ENCODE measurements at regions of chr19 and their contacts with region 1.

Region 1: GRCh38 chr19:54373781-54374631 is 9.3 kb upstream of the LAIR1 start:
- DNase-seq: peak in 1 of 9 experiments; percentile 37
- ATAC-seq: no peak
- H3K4me3 ChIP-seq: no peak overlapping the region
- H3K4me3 Mint-ChIP-seq: no peak overlapping the region
- H3K27ac ChIP-seq: no peak overlapping the region
- H3K27ac Mint-ChIP-seq: no peak overlapping the region
- H3K4me1 ChIP-seq: peaks cover 82% of the 10 kb centered on the region
- H3K4me1 Mint-ChIP-seq: peaks cover 77% of the 10 kb centered on the region
- H3K27me3 ChIP-seq: no peaks in the 10 kb centered on the region
- H3K27me3 Mint-ChIP-seq: no peaks in the 10 kb centered on the region
- CTCF ChIP-seq: no peak

Region 2: GRCh38 chr19:53879140-53880081 is 494.6 kb before region 1 on chr19:
- CTCF ChIA-PET with region 1: no interaction called
- POLR2A ChIA-PET with region 1: no interaction called
- intact Hi-C with region 1: loop called in 1 of 2 experiments (anchors 10 kb)
- DNase-seq: peak; percentile 70 to 89 (median 79)
- ATAC-seq: peak; percentile 80
- H3K4me3 ChIP-seq: peak overlapping the region; percentile 53 to 55
- H3K4me3 Mint-ChIP-seq: no peak overlapping the region
- H3K27ac ChIP-seq: no peak overlapping the region
- H3K27ac Mint-ChIP-seq: no peak overlapping the region
- H3K4me1 ChIP-seq: peaks cover 76% of the 10 kb centered on the region
- H3K4me1 Mint-ChIP-seq: peaks cover 50% of the 10 kb centered on the region
- H3K27me3 ChIP-seq: peaks cover 36 to 39% of the 10 kb centered on the region in 2 experiments
- H3K27me3 Mint-ChIP-seq: peaks cover 11% of the 10 kb centered on the region
- CTCF ChIP-seq: no peak

Region 3: DNA sequence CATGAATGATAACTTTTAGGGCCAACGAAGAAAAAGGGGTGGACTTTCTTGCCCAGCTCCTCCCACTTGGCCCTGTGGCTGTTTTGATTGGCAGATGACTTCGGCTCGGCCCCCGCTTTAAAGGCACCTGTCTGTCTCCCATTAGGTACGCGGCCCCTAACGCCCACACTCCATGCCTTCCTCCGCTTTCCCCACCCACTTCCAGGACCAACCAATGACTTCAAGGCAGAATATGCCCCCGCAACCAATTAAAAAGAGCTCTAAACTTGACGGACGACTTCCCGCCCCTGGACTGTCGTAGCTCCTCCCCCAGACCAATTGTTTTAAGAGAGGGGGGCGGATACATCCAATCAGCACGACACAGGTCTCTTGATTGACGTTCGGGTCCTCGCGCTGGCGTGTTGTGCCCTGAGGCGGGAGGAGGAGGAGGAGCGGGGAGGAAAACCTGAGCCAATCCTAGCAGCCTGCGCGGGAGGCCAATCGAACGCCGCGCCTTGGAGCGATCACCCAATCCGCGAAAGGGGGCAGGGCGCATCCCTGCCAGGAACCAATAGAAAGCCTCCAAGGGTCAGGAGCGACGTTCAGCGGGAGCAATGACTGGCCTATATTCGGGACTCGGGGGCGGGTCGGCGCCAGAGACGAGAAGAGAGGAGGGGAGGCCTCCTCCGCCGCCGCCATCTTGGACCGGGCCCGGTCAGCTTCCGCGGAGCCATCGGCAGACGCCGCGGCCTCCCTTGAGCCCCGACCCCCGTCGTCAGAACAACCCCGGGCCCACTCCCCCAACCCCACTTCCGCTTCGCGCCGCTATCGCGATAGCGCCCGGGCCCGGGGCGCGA is 236.7 kb before region 1 on chr19 and contains the start of gene CNOT3:
- CTCF ChIA-PET with region 1: no interaction called
- POLR2A ChIA-PET with region 1: no interaction called
- intact Hi-C with region 1: no loop called
- DNase-seq: peak; percentile 95 to 100 (median 99)
- ATAC-seq: peak; percentile 76
- H3K4me3 ChIP-seq: peak within 1 kb of the TSS; percentile 55 to 74
- H3K4me3 Mint-ChIP-seq: peak within 1 kb of the TSS; percentile 88
- H3K27ac ChIP-seq: peak within 1 kb of the TSS; percentile 85 to 97
- H3K27ac Mint-ChIP-seq: peak within 1 kb of the TSS; percentile 95
- H3K4me1 ChIP-seq: peaks cover 33% of the 10 kb centered on the region
- H3K4me1 Mint-ChIP-seq: peaks cover 50% of the 10 kb centered on the region
- H3K27me3 ChIP-seq: peaks cover 0 to 3% of the 10 kb centered on the region in 2 experiments
- H3K27me3 Mint-ChIP-seq: no peaks in the 10 kb centered on the region
- CTCF ChIP-seq: no peak
- total RNA-seq, gene CNOT3: 30.8 to 42.3 TPM

Region 4: DNA sequence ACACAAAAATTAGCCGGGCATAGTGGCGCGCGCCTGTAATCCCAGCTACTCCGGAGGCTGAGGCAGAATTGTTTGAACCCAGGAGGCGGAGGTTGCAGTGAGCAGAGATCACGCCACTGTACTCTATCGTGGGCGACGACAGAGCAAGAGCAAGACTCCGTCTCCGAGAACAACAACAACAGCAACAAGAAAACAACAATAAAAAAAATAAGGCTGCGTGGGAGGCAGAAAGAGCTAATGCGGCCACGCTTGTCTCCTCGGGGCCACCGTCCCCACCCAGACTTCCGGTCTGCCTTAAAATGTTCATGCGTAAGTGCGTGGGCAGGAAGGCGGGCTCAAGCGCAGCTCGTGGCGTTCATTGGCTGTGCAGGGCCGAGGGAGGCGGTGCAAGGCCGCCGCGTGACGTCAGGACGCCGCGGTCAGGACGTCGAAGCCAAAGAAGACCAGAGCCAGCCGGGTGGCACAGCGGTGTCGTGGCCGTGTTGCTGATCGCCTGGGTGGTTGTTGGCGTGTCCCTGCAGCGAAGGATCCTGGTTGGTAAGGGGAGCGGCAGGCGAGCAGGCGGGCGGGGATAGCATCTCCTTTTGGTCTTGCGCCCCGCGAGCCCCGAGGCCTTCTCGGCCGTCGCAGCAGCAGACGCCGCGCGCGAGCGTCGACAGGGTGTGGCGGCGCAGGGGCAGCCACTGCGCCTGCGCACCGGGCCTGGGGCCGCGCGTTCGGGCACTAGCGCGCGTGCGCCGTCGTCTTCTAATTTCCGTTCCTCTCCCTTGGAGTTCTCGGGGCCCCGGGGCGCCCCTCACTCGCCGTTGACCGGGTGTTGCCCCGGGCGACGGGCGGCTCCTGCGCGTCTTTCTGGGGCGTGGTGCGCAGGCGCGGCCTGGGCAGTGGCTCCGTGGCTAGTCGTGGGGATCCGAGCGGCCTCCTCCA is 75.0 kb after region 1 on chr19 and contains the start of gene LENG8:
- CTCF ChIA-PET with region 1: no interaction called
- POLR2A ChIA-PET with region 1: interaction called, 3 read pairs
- intact Hi-C with region 1: loop called in 1 of 2 experiments (anchors 10 kb)
- DNase-seq: peak; percentile 94 to 100 (median 97)
- ATAC-seq: peak; percentile 89
- H3K4me3 ChIP-seq: peak within 1 kb of the TSS; percentile 66 to 67
- H3K4me3 Mint-ChIP-seq: peak within 1 kb of the TSS; percentile 99
- H3K27ac ChIP-seq: peak within 1 kb of the TSS; percentile 97 to 98
- H3K27ac Mint-ChIP-seq: peak within 1 kb of the TSS; percentile 99
- H3K4me1 ChIP-seq: peaks cover 39% of the 10 kb centered on the region
- H3K4me1 Mint-ChIP-seq: peaks cover 52% of the 10 kb centered on the region
- H3K27me3 ChIP-seq: no peaks in the 10 kb centered on the region
- H3K27me3 Mint-ChIP-seq: no peaks in the 10 kb centered on the region
- CTCF ChIP-seq: no peak
- total RNA-seq, gene LENG8: 514 to 558 TPM

Region 5: DNA sequence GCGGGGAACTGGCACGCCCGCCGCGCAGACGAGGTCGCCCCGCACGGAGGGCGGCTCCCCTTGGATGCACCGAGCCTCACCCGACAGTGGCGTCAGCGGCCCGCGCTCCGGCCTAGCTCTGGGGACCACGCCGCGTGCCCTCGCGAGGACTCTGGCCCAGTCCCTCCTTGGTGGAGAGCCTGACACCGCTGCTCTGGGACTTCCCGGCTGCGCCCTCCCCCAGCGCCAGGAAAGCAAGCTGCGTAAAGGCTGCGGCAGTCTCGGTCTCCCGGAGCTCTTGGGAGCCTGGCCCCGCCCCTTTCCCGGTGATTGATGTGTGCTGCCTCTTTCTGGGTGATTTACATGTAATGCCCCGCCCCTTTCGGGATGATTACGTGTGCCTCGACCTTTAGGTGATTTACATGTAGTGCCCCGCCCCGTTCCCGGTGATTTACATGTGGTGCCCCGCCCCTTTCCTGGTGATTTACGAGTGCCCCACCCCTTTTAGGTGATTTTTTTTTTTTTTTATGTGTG is 89.6 kb after region 1 on chr19 and contains the start of gene LENG9:
- CTCF ChIA-PET with region 1: no interaction called
- POLR2A ChIA-PET with region 1: no interaction called
- intact Hi-C with region 1: loop called in 1 of 2 experiments (anchors 5 kb)
- DNase-seq: peak; percentile 81 to 100 (median 91)
- ATAC-seq: peak; percentile 70
- H3K4me3 ChIP-seq: peak within 1 kb of the TSS; percentile 79 to 83
- H3K4me3 Mint-ChIP-seq: peak within 1 kb of the TSS; percentile 86
- H3K27ac ChIP-seq: peak within 1 kb of the TSS; percentile 81 to 84
- H3K27ac Mint-ChIP-seq: peak within 1 kb of the TSS; percentile 93
- H3K4me1 ChIP-seq: peaks cover 20% of the 10 kb centered on the region
- H3K4me1 Mint-ChIP-seq: peaks cover 36% of the 10 kb centered on the region
- H3K27me3 ChIP-seq: no peaks in the 10 kb centered on the region
- H3K27me3 Mint-ChIP-seq: no peaks in the 10 kb centered on the region
- CTCF ChIP-seq: no peak
- total RNA-seq, gene LENG9: 2.3 to 2.7 TPM